OCI-LY7 (cell line): ENCODE measurements at regions of chr2 and their contacts with region 1.

Region 1: GRCh38 chr2:237667893-237668292 is 40.5 kb downstream of the LRRFIP1 start:
- DNase-seq: no peak
- H3K4me3 ChIP-seq: no peak overlapping the region
- H3K27ac ChIP-seq: peak overlapping the region; percentile 97
- H3K4me1 ChIP-seq: peaks cover 97% of the 10 kb centered on the region
- CTCF ChIP-seq: no peak

Region 2: DNA sequence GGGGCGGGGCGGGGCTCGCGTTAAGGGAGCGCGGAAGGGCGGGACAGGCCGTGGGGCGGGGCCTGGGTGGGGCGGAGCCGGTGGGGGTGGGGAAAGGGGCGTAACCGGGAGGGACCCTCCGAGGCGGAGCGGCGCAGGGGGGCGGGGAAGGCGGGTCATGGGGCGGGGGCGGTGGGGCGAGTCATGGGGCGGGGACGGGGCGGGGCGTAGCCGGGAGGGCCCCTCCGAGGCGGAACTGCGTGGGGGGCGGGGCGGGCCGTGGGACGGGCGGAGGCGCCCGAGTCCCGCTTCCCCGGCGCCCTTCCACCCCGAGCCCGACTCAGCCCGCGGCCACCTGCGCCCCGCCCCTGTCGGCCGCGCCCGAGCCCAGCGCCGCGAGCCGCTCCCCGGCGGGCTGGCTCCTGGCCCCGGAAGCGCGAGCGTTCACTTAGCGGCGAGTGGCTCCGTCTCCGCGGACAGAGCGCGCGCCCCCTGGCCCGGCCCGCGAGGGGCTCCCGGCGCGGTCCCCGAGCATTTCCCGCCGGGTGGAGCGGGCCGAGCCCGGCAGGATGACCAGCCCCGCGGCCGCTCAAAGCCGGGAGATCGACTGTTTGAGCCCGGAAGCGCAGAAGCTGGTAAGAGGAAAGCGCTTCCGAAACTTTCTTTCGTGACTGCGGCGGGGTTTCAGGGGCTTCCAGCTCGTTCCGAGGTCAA is 24.2 kb after region 1 on chr2:
- CTCF ChIA-PET with region 1: interaction called, 24 read pairs
- POLR2A ChIA-PET with region 1: interaction called, 290 read pairs
- intact Hi-C with region 1: loop called (anchors 1 kb)
- DNase-seq: peak; percentile 92
- H3K4me3 ChIP-seq: peak overlapping the region; percentile 91
- H3K27ac ChIP-seq: peak overlapping the region; percentile 99
- H3K4me1 ChIP-seq: peaks cover 49% of the 10 kb centered on the region
- CTCF ChIP-seq: no peak